ENCODE measurements at regions of chr2 and their contacts with region 1.

Region 1: GRCh38 chr2:136932700-136933099 is 167.4 kb downstream of the THSD7B start:
- DNase-seq: no peak
- ATAC-seq: peak; percentile 80
- H3K4me3 ChIP-seq: no peak overlapping the region
- H3K27ac ChIP-seq: no peak overlapping the region
- H3K4me1 ChIP-seq: no peaks in the 10 kb centered on the region
- H3K27me3 ChIP-seq: no peaks in the 10 kb centered on the region
- CTCF ChIP-seq: peak; percentile 41 to 60 (median 51); a peak in 5 of 6 replicates
- EP300 ChIP-seq: no peak
- POLR2A ChIP-seq: no peak
- RAD21 ChIP-seq: peak; percentile 59

Region 2: GRCh38 chr2:136909777-136910176 is 22.9 kb before region 1 on chr2:
- CTCF ChIA-PET with region 1: no interaction called
- POLR2A ChIA-PET with region 1: no interaction called
- RAD21 ChIA-PET with region 1: no interaction called
- SMC1A ChIA-PET with region 1: no interaction called
- in situ Hi-C with region 1: no loop called
- intact Hi-C with region 1: no loop called
- DNase-seq: no peak
- ATAC-seq: no peak
- H3K4me3 ChIP-seq: no peak overlapping the region
- H3K27ac ChIP-seq: no peak overlapping the region
- H3K4me1 ChIP-seq: no peaks in the 10 kb centered on the region
- H3K27me3 ChIP-seq: no peaks in the 10 kb centered on the region
- CTCF ChIP-seq: no peak
- EP300 ChIP-seq: no peak
- POLR2A ChIP-seq: no peak
- RAD21 ChIP-seq: no peak

Region 3: DNA sequence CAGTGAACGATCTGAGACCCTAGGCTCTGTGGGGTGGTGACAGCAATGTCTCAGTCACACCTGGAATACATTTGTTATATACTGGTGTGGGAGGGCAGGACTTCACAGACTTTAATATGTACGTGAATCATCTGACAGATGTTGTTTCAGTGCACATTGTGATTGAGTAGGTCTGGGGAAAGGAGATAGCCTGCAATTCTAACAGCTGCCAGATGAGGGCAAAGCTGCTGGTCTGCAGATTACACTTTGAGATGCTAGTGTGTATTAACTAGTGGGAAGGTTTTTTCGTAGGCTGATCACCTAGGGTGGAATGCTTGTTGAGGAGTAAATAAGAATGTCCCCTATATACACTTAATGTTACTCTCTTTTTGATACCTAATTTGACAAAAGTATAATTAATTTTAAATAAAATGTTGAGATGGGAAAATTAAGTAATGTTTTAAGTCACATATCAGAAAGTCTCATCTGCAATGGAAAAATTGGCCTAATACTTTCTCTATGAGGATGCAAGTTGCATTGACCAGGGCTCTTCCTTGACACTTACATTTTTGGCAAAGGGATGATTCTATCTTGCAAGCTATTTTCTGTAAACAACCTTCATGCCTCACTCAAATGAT is 534.7 kb after region 1 on chr2:
- CTCF ChIA-PET with region 1: interaction called, 4 read pairs
- POLR2A ChIA-PET with region 1: no interaction called
- RAD21 ChIA-PET with region 1: no interaction called
- SMC1A ChIA-PET with region 1: no interaction called
- in situ Hi-C with region 1: no loop called
- intact Hi-C with region 1: loop called (anchors 10 kb)
- DNase-seq: peak; percentile 1
- ATAC-seq: peak; percentile 93
- H3K4me3 ChIP-seq: no peak overlapping the region
- H3K27ac ChIP-seq: no peak overlapping the region
- H3K4me1 ChIP-seq: no peaks in the 10 kb centered on the region
- H3K27me3 ChIP-seq: no peaks in the 10 kb centered on the region
- CTCF ChIP-seq: peak; percentile 62 to 74 (median 74)
- EP300 ChIP-seq: no peak
- POLR2A ChIP-seq: no peak
- RAD21 ChIP-seq: peak; percentile 56

Region 4: GRCh38 chr2:137677463-137677862 is 744.8 kb after region 1 on chr2:
- CTCF ChIA-PET with region 1: interaction called, 4 read pairs
- POLR2A ChIA-PET with region 1: no interaction called
- RAD21 ChIA-PET with region 1: no interaction called
- SMC1A ChIA-PET with region 1: no interaction called
- in situ Hi-C with region 1: no loop called
- intact Hi-C with region 1: loop called (anchors 10 kb)
- DNase-seq: no peak
- ATAC-seq: no peak
- H3K4me3 ChIP-seq: no peak overlapping the region
- H3K27ac ChIP-seq: no peak overlapping the region
- H3K4me1 ChIP-seq: no peaks in the 10 kb centered on the region
- H3K27me3 ChIP-seq: no peaks in the 10 kb centered on the region
- CTCF ChIP-seq: no peak; a peak in 1 of 6 replicates
- EP300 ChIP-seq: no peak
- POLR2A ChIP-seq: no peak
- RAD21 ChIP-seq: 0 out of 2 replicates have a peak, but pooled peaks have one; percentile 4

Measured in GM12878 (cell line).